ENCODE measurements at regions of chr13 and their contacts with region 1.

Region 1: DNA sequence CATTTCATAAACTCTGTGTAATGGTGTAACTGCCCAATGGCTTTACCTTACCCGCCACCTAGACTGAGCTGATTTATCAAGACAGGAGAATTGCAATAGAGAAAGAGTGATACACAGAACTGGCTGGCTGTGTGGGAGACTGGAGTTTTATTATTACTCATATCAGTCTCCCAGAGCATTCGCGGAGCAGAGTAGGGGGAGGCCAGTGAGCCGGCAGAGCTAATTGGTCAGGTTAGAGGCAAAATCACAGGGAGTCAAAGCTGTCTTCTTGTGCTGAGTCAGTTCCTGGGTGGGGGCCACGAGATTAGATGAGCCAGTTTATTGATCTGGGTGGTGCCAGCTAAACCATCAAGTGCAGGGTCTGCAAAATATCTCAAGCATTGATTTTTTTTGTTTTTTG is 23.4 kb upstream of the SLITRK1 start:
- DNase-seq: no peak
- ATAC-seq: no peak
- H3K4me3 ChIP-seq: no peak overlapping the region
- H3K27ac ChIP-seq: no peak overlapping the region
- H3K4me1 ChIP-seq: no peaks in the 10 kb centered on the region
- H3K27me3 ChIP-seq: no peaks in the 10 kb centered on the region
- CTCF ChIP-seq: no peak

Region 2: DNA sequence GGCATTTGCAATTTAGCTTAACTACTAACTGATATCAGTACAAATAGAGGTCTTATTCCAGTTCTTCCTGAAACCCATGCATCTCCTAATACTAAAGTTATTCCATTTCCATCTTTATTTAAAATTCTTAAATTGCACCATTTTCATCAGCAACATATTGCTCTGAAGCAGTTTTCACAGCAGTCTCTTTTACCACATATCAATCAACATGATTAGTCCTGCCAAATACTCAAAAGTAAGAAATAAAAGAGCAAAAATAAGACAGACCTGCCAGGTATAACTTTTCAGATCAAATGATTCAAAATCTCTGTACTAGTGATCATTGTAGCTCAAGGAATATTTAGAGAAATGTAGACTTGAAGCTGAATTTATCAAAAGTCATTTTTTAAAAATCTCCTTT is 165.0 kb before region 1 on chr13:
- intact Hi-C with region 1: no loop called
- DNase-seq: no peak
- ATAC-seq: no peak
- H3K4me3 ChIP-seq: no peak overlapping the region
- H3K27ac ChIP-seq: no peak overlapping the region
- H3K4me1 ChIP-seq: no peaks in the 10 kb centered on the region
- H3K27me3 ChIP-seq: no peaks in the 10 kb centered on the region
- CTCF ChIP-seq: no peak

Region 3: DNA sequence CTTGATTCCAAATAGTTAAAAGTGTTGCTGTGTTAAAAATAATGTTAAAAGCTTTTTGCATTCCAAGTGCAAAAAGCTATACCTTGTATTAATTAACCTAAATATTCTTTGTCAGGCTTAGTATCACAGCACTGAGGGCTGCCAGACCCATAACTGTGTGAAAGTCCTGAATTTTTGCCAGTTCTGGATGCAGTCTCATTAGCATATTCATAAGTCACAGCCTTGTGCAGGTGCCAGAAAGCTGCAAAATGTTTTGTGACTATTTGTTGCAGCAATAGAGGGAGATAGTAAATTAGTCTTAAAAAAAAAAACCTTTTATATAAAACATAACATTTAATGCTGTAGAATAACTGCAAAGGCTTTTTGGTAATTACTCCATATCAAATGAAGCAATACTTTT is 80.0 kb before region 1 on chr13:
- intact Hi-C with region 1: no loop called
- DNase-seq: no peak
- ATAC-seq: no peak
- H3K4me3 ChIP-seq: no peak overlapping the region
- H3K27ac ChIP-seq: no peak overlapping the region
- H3K4me1 ChIP-seq: no peaks in the 10 kb centered on the region
- H3K27me3 ChIP-seq: no peaks in the 10 kb centered on the region
- CTCF ChIP-seq: no peak

Region 4: DNA sequence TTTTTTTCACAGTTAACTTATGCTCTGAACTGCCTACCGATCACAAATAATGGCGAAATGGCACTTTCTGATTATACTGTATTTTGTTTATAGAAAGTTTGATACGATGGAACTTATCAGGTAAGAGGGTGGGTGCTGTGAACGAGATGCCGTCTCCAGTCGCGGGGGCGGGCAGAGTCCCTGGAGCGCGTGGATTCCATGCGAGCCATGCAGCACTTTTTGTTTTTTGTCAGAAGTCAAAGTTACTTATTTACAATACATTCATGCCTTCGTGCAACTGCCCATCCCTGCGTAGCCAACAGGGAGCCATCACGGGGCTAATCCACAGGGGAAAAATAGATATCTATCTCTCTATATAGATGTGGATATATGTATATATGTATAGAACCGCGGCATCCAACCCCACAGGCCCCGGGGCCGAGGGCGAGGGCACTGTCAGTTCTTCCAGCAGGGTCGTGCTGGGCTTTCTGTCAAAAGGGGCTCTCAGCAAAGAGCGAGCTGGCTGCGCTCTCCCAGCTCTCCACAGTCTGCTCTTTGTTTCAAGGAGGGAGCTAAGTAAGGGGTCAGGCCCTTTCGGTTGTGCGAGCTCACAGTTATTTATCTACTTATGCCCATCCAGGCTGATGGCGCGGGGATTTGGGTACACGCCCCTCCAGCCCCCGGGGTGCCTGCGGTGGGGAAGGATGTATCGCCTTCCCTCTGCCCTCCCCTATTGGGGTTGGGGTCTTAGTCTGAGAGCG is 26.8 kb before region 1 on chr13:
- intact Hi-C with region 1: loop called in 1 of 10 experiments (anchors 1 kb)
- DNase-seq: no peak
- ATAC-seq: no peak
- H3K4me3 ChIP-seq: peak overlapping the region in 1 of 10 donors; percentile 1
- H3K27ac ChIP-seq: no peak overlapping the region
- H3K4me1 ChIP-seq: peaks cover 0 to 7% (median 0%) of the 10 kb centered on the region in 9 donors
- H3K27me3 ChIP-seq: peaks cover 11 to 63% (median 55%) of the 10 kb centered on the region in 7 donors
- CTCF ChIP-seq: no peak

Region 5: GRCh38 chr13:84668637-84669036 is 763.0 kb after region 1 on chr13:
- intact Hi-C with region 1: no loop called
- DNase-seq: no peak
- ATAC-seq: no peak
- H3K4me3 ChIP-seq: no peak overlapping the region
- H3K27ac ChIP-seq: no peak overlapping the region
- H3K4me1 ChIP-seq: no peaks in the 10 kb centered on the region
- H3K27me3 ChIP-seq: no peaks in the 10 kb centered on the region
- CTCF ChIP-seq: no peak

Measured in heart right ventricle (tissue), 16 donors.